T-cell (primary cell): ENCODE measurements at regions of chr10 and their contacts with region 1.

Region 1: DNA sequence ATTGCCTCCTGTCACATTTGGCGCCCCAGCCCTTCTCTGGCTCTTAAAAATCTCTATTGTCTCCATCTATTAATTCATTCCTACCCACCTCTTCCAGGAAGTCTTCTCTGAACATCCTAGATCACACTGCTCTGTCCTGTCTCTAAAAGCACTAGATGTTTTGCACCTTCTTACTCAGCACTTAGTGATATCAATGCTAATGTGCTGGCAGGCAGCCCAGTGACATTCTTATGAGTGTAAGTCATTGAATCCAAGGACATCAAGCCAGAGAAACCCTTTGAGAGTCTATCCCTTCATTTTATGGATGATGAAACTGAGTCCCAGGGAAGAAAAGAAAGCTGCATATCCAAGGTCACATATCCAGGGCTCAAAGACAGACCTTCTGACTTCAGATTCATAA is 48.3 kb upstream of the PAX2 start:
- DNase-seq: no peak
- ATAC-seq: no peak
- H3K4me3 ChIP-seq: no peak overlapping the region
- H3K4me3 Mint-ChIP-seq: no peak overlapping the region
- H3K27ac ChIP-seq: no peak overlapping the region
- H3K27ac Mint-ChIP-seq: no peak overlapping the region
- H3K4me1 ChIP-seq: no peaks in the 10 kb centered on the region
- H3K4me1 Mint-ChIP-seq: peaks cover 0 to 4% (median 0%) of the 10 kb centered on the region in 3 donors
- H3K27me3 ChIP-seq: peaks cover 4 to 22% of the 10 kb centered on the region in 2 experiments
- H3K27me3 Mint-ChIP-seq: peaks cover 20 to 22% of the 10 kb centered on the region in 2 donors

Region 2: GRCh38 chr10:98748298-98748697 is 1948.8 kb before region 1 on chr10:
- CTCF ChIA-PET with region 1: no interaction called
- POLR2A ChIA-PET with region 1: no interaction called
- DNase-seq: no peak
- ATAC-seq: no peak
- H3K4me3 ChIP-seq: no peak overlapping the region
- H3K4me3 Mint-ChIP-seq: no peak overlapping the region
- H3K27ac ChIP-seq: no peak overlapping the region
- H3K27ac Mint-ChIP-seq: no peak overlapping the region
- H3K4me1 ChIP-seq: no peaks in the 10 kb centered on the region
- H3K4me1 Mint-ChIP-seq: no peaks in the 10 kb centered on the region
- H3K27me3 ChIP-seq: no peaks in the 10 kb centered on the region
- H3K27me3 Mint-ChIP-seq: peaks cover 0 to 6% of the 10 kb centered on the region in 2 donors

Region 3: GRCh38 chr10:100670828-100671479 is 26.1 kb before region 1 on chr10:
- CTCF ChIA-PET with region 1: interaction called, 3 to 15 read pairs
- POLR2A ChIA-PET with region 1: no interaction called
- DNase-seq: peak in 31 of 35 experiments; percentile 10 to 68 (median 42)
- ATAC-seq: peak; percentile 78 to 81 (median 80)
- H3K4me3 ChIP-seq: peak overlapping the region in 1 of 2 donors; percentile 23
- H3K4me3 Mint-ChIP-seq: peak overlapping the region in 1 of 3 donors; percentile 34
- H3K27ac ChIP-seq: no peak overlapping the region
- H3K27ac Mint-ChIP-seq: no peak overlapping the region
- H3K4me1 ChIP-seq: peaks cover 0 to 5% of the 10 kb centered on the region in 2 experiments
- H3K4me1 Mint-ChIP-seq: peaks cover 6 to 8% (median 7%) of the 10 kb centered on the region in 3 donors
- H3K27me3 ChIP-seq: peaks cover 29 to 79% of the 10 kb centered on the region in 2 experiments
- H3K27me3 Mint-ChIP-seq: peaks cover 61 to 66% of the 10 kb centered on the region in 2 donors